GM10248 (cell line): ENCODE measurements at regions of chr1 and their contacts with region 1.

Region 1: GRCh38 chr1:51768971-51769588 is 109.4 kb downstream of the NRDC start:
- DNase-seq: peak; percentile 60
- CTCF ChIP-seq: peak; percentile 53

Region 2: DNA sequence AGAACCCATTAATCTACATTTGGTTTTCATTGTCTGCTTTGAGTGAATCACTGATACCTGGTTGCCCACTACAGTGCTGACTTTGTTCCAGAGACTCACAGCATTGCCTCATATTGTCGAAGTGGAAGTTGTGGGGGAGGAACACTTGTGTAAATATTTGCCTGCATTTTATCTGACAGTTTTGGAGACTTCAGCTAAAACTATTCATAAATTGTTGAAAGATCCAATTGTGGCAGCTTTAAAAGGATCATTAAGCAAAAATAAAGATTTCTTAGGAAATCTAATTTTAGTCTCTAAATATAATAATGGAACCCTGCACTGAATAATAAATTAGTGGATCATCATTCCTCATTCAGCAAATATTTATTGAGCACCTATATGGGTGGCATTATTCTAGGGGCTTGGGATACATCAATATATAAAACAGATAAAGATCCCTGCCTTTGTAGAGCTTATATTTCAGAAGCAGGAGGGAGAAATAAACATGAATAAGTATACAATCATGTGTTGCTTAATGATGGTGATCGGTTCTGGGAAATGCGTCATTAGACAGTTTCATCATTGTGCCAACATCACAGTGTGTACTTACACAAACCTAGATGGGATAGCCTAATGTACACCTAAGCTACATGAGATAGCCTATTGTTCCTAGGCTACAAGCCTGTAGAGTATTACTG is 78.7 kb before region 1 on chr1:
- CTCF ChIA-PET with region 1: interaction called, 11 read pairs
- POLR2A ChIA-PET with region 1: no interaction called
- DNase-seq: no peak
- CTCF ChIP-seq: no peak

Region 3: DNA sequence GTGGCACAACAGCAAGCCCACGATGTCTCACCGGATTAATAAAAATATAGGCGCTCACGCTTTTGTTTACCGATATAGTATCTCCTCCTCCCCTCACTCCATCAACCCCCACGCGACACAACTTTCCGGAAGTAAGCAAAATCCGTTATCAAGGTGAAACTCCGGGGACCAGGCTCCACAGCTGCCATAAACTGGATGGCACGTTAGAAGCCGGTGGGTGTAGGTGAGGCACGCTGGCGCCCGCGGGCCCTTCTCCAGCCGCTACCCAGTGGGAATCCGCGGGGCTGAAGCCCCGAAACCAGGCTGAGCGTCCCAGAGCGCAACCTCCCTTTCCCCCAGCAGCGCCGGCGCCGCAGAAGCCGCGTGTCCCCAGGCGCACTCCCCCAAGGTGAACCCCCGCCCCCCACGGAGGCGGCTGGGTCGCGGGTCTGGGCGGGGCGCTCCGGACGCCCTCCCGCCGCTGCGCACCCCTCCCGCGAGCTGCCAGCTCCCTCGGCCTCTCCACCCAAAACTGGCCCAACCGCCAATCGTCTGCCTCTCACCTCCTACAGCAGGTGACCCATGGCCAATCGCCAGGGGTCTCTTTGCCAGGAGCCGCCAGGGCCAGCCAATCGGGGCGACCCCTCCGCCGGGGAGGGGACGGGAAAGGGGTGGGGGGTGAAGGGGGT is 39.8 kb before region 1 on chr1:
- CTCF ChIA-PET with region 1: interaction called, 13 read pairs
- POLR2A ChIA-PET with region 1: no interaction called
- DNase-seq: peak; percentile 98
- CTCF ChIP-seq: no peak

Region 4: GRCh38 chr1:51750218-51750617 is 18.9 kb before region 1 on chr1:
- CTCF ChIA-PET with region 1: interaction called, 33 read pairs
- POLR2A ChIA-PET with region 1: no interaction called
- DNase-seq: no peak
- CTCF ChIP-seq: no peak

Region 5: GRCh38 chr1:51790385-51790784 is 21.3 kb after region 1 on chr1:
- CTCF ChIA-PET with region 1: interaction called, 26 read pairs
- POLR2A ChIA-PET with region 1: no interaction called
- DNase-seq: no peak
- CTCF ChIP-seq: no peak

Region 6: GRCh38 chr1:52225174-52225573 is 456.1 kb after region 1 on chr1:
- CTCF ChIA-PET with region 1: no interaction called
- POLR2A ChIA-PET with region 1: no interaction called
- DNase-seq: no peak
- CTCF ChIP-seq: no peak